Activated naive CD4-positive, alpha-beta T cell treated with anti-CD3 and anti-CD28 coated beads for 36 hours (primary cell): ENCODE measurements at regions of chr17 and their contacts with region 1.

Region 1: DNA sequence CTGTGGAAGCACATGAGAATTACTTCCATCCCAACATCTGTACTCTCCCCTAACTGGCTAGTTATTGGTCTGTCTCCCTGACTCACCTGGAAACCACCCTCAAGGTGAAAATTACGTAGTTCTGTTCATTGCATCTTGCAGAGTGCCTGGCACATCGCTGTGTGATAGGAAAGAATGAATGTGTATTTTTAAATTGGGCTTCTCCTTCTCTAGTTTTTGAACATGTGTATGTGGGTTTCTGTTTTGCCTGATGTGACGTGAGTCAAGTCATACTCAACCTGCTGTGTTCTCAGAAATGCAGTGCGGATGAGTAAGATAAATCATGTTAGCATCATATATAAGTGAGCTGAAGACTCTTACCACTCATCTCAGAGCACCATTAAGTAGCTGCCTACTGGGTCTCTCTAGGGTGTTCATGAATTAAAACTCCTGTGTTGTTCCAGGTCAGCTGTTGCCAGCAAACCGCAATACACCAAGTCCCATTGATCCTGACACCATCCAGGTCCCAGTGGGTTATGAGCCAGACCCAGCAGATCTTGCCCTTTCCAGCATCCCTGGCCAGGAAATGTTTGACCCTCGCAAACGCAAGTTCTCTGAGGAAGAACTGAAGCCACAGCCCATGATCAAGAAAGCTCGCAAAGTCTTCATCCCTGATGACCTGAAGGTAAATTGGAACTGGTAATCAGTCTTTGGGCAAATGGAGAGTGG is 50.2 kb downstream of the HLF start:
- DNase-seq: peak; percentile 35
- H3K4me3 Mint-ChIP-seq: no peak overlapping the region
- H3K27ac Mint-ChIP-seq: peak overlapping the region; percentile 61
- H3K4me1 Mint-ChIP-seq: peaks cover 6% of the 10 kb centered on the region
- H3K27me3 Mint-ChIP-seq: peaks cover 2% of the 10 kb centered on the region

Region 2: GRCh38 chr17:55348749-55349354 is 33.9 kb after region 1 on chr17:
- CTCF ChIA-PET with region 1: interaction called, 4 read pairs
- intact Hi-C with region 1: loop called (anchors 2 kb)
- DNase-seq: peak; percentile 54
- H3K4me3 Mint-ChIP-seq: no peak overlapping the region
- H3K27ac Mint-ChIP-seq: no peak overlapping the region
- H3K4me1 Mint-ChIP-seq: peaks cover 4% of the 10 kb centered on the region
- H3K27me3 Mint-ChIP-seq: peaks cover 2% of the 10 kb centered on the region